ENCODE measurements at regions of chr12 and their contacts with region 1.

Region 1: DNA sequence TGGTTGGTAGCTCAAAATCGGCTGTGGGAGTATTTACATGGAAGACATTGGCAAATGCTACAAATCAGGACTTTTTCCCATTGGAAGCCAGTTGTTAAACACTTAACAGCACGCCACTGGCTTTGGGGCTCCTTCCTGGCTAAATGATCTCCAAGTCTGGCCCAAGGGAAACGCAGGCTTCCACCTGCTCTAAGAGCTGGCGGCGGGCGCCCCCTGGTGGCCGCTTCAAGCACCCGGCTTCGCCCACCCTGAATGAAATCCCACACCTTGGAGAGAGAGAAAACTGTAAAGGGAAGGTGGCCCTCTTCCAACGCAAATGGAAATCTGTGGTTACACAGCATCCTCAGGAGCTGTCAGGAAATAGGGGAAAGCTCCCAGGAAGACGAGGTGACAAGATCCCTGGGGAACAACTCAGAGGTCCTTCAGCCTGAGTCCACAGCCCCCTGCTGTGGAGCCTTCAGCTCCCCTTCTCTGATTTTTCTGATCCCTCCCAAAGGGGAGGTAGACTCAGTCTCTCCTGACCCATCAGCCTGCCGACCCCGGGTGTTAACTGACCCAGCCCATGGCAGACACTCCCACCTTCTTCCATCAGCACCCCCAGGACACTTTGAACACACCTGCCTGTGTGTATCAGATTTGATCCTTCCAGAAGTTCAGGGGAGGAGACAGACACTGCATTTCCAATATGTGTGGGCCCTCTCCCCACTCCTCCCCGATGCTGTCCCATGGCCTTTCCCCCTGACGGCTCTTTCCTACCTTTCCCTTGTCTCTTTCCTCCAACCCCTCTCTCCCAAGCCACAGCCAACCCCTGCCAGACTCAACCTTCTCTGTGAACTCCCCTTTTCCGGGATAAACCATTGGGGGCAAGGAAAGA is 15.4 kb downstream of the SELPLG start:
- DNase-seq: peak; percentile 90
- H3K4me3 Mint-ChIP-seq: no peak overlapping the region
- H3K27ac Mint-ChIP-seq: no peak overlapping the region
- H3K4me1 Mint-ChIP-seq: peaks cover 16% of the 10 kb centered on the region
- H3K27me3 Mint-ChIP-seq: peaks cover 12% of the 10 kb centered on the region
- CTCF ChIP-seq: peak; percentile 95

Region 2: GRCh38 chr12:108570743-108571608 is 47.3 kb before region 1 on chr12:
- CTCF ChIA-PET with region 1: interaction called, 19 read pairs
- intact Hi-C with region 1: loop called (anchors 2 kb)
- DNase-seq: no peak
- H3K4me3 Mint-ChIP-seq: no peak overlapping the region
- H3K27ac Mint-ChIP-seq: no peak overlapping the region
- H3K4me1 Mint-ChIP-seq: peaks cover 6% of the 10 kb centered on the region
- H3K27me3 Mint-ChIP-seq: peaks cover 23% of the 10 kb centered on the region
- CTCF ChIP-seq: peak; percentile 16